ENCODE measurements at regions of chr3 and their contacts with region 1.

Region 1: DNA sequence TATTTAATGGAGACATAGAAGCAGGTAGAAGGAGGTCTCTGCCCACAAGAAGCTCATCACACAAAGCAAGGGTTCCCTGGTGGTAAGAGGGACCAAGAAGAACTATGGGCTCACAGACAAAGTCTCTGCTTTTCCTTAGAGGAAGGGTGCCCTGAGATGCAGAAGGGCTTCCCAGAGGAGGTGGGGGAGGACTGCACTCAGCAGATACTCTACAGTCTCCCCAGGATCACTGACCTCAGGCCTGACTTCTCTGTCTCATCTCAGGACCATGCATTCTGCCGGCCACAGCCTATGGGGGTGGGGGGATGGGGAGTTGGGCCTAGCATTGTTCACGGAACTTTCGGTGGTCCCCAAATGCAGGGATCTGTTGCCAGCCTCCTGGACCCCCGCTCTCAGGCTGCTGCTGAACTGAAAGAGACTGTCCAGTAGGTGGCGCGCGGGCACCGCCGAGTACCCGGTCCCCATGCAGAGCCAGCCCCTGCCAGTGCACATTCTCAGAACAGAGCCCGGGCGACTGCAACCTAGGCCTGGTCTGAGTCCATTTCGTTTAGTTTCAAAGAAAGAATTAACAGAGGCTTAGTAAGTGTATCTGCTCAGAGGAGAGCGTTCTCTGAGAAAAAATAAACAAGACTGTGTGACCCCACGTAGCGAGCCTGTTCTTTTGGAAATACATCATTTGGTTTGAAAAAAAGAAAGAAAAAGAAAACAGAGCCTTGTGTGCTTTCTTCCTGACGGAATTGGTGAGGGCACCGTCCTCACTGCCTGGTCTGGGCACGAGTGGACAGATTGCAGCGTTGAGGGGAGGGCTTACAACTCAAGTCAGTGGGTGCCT is 74.1 kb downstream of the LRTM1 start:
- DNase-seq: peak; percentile 86
- H3K4me3 ChIP-seq: no peak overlapping the region
- H3K27ac ChIP-seq: no peak overlapping the region
- H3K4me1 ChIP-seq: peaks cover 0 to 15% of the 10 kb centered on the region in 2 experiments; a peak in 1 of 4 replicates
- H3K27me3 ChIP-seq: no peaks in the 10 kb centered on the region
- CTCF ChIP-seq: peak; percentile 95
- EP300 ChIP-seq: no peak
- RAD21 ChIP-seq: peak; percentile 94

Region 2: DNA sequence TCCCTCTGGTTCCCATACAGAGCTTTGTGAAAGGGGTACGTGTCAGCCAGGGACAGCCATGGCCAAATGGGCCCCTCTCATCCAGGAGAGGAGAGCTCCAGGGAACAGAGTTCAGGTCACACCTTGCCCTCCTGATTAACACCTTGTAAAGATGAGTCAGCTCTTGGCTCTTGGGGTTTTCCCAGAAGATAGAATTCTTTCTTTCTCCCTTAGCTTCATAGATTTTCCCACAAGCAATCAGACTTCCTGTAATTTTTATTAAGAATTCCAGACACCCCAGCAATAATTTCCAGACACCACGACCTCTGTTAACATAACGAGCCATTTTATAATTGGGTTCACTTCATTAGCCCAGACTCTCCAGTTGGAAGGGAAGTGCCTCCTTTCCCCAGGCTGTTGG is 12.3 kb before region 1 on chr3:
- CTCF ChIA-PET with region 1: interaction called, 12 read pairs
- POLR2A ChIA-PET with region 1: no interaction called
- DNase-seq: no peak
- H3K4me3 ChIP-seq: no peak overlapping the region
- H3K27ac ChIP-seq: no peak overlapping the region
- H3K4me1 ChIP-seq: peaks cover 0 to 10% of the 10 kb centered on the region in 2 experiments; a peak in 1 of 4 replicates
- H3K27me3 ChIP-seq: no peaks in the 10 kb centered on the region; the same call in 1 of the 2 replicates
- CTCF ChIP-seq: no peak
- EP300 ChIP-seq: no peak
- RAD21 ChIP-seq: no peak

Region 3: GRCh38 chr3:54870423-54870822 is 16.6 kb after region 1 on chr3:
- CTCF ChIA-PET with region 1: interaction called, 11 read pairs
- POLR2A ChIA-PET with region 1: no interaction called
- DNase-seq: peak; percentile 55
- H3K4me3 ChIP-seq: no peak overlapping the region
- H3K27ac ChIP-seq: peak overlapping the region; percentile 18 to 83; a peak in 3 of 4 replicates
- H3K4me1 ChIP-seq: peaks cover 0 to 6% of the 10 kb centered on the region in 2 experiments; a peak in 1 of 4 replicates
- H3K27me3 ChIP-seq: no peaks in the 10 kb centered on the region
- CTCF ChIP-seq: peak; percentile 82
- EP300 ChIP-seq: peak; percentile 33 to 86; a peak in 2 of 4 replicates
- RAD21 ChIP-seq: peak; percentile 87